IMR-90 (cell line): ENCODE measurements at regions of chr12 and their contacts with region 1.

Region 1: GRCh38 chr12:89524541-89525285 is at the start of gene GALNT4:
- DNase-seq: peak; percentile 85
- ATAC-seq: peak; percentile 81
- H3K4me3 ChIP-seq: peak within 1 kb of the TSS; percentile 88
- H3K27ac ChIP-seq: peak within 1 kb of the TSS; percentile 90
- H3K4me1 ChIP-seq: peaks cover 11% of the 10 kb centered on the region
- H3K27me3 ChIP-seq: no peaks in the 10 kb centered on the region
- CTCF ChIP-seq: peak; percentile 70
- POLR2A ChIP-seq: peak; percentile 19; the same call in 1 of the 2 replicates
- RAD21 ChIP-seq: peak; percentile 58
- total RNA-seq, gene GALNT4: 9.0 and 14.2 TPM in 2 replicates

Region 2: GRCh38 chr12:88141770-88142609 is 1382.7 kb before region 1 on chr12 and contains the starts of genes CEP290 and TMTC3:
- CTCF ChIA-PET with region 1: no interaction called
- POLR2A ChIA-PET with region 1: no interaction called
- dilution Hi-C with region 1: no loop called
- in situ Hi-C with region 1: loop called (anchors 25 kb)
- intact Hi-C with region 1: no loop called
- DNase-seq: peak; percentile 100
- ATAC-seq: peak; percentile 98
- H3K4me3 ChIP-seq: peak within 1 kb of the TSS; percentile 68
- H3K27ac ChIP-seq: peak within 1 kb of the TSS; percentile 57
- H3K4me1 ChIP-seq: no peaks in the 10 kb centered on the region
- H3K27me3 ChIP-seq: no peaks in the 10 kb centered on the region
- CTCF ChIP-seq: no peak
- POLR2A ChIP-seq: peak; percentile 62; the same call in 1 of the 2 replicates
- RAD21 ChIP-seq: no peak; the same call in 1 of the 2 replicates
- total RNA-seq, gene CEP290: 7.9 and 17.5 TPM in 2 replicates
- total RNA-seq, gene TMTC3: 44.3 and 70.8 TPM in 2 replicates

Region 3: DNA sequence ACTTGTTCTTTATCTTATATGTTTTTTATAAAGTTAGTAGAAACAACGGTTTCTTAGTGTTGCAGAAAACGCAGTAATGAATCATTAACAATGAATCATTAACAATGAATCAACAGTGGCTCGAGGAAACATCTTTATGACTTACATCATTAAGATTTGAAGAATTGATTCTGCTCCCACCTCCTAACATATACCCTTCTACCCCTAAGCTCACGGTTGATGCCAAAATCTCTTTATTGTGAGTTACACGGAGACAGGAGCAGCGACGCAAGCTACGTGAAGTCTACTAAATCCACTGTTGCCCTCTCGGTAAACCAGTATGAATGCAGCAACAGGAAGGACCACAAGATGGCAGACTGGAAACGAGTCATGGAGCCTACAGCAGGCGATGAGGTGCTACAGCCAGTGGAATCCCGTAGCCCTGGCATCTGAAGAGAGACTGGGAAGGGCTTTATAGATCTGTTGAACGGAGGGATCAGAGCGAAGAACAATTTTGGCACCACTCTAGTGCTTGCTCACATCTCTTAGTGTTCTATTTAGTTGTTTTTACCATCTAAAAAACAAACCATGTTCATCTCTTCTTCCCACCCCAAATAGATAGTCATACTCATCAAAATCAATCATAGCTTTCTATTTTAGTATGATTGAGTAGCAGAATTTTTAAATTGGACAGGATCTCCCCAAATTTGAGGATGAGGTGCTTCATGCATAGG is 505.1 kb before region 1 on chr12:
- CTCF ChIA-PET with region 1: interaction called, 10 read pairs
- POLR2A ChIA-PET with region 1: no interaction called
- dilution Hi-C with region 1: no loop called
- in situ Hi-C with region 1: loop called (anchors 5 kb)
- intact Hi-C with region 1: loop called (anchors 1 kb)
- DNase-seq: peak; percentile 88
- ATAC-seq: peak; percentile 97
- H3K4me3 ChIP-seq: peak overlapping the region; percentile 28
- H3K27ac ChIP-seq: no peak overlapping the region; the same call in 1 of the 2 replicates
- H3K4me1 ChIP-seq: no peaks in the 10 kb centered on the region
- H3K27me3 ChIP-seq: no peaks in the 10 kb centered on the region
- CTCF ChIP-seq: peak; percentile 96
- POLR2A ChIP-seq: no peak; the same call in 1 of the 2 replicates
- RAD21 ChIP-seq: peak; percentile 95

Region 4: GRCh38 chr12:89051065-89051677 is 473.5 kb before region 1 on chr12:
- CTCF ChIA-PET with region 1: no interaction called
- POLR2A ChIA-PET with region 1: no interaction called
- dilution Hi-C with region 1: no loop called
- in situ Hi-C with region 1: no loop called
- intact Hi-C with region 1: loop called (anchors 10 kb)
- DNase-seq: peak; percentile 78
- ATAC-seq: peak; percentile 63
- H3K4me3 ChIP-seq: no peak overlapping the region
- H3K27ac ChIP-seq: no peak overlapping the region
- H3K4me1 ChIP-seq: no peaks in the 10 kb centered on the region
- H3K27me3 ChIP-seq: no peaks in the 10 kb centered on the region
- CTCF ChIP-seq: peak; percentile 88
- POLR2A ChIP-seq: no peak
- RAD21 ChIP-seq: peak; percentile 90

Region 5: DNA sequence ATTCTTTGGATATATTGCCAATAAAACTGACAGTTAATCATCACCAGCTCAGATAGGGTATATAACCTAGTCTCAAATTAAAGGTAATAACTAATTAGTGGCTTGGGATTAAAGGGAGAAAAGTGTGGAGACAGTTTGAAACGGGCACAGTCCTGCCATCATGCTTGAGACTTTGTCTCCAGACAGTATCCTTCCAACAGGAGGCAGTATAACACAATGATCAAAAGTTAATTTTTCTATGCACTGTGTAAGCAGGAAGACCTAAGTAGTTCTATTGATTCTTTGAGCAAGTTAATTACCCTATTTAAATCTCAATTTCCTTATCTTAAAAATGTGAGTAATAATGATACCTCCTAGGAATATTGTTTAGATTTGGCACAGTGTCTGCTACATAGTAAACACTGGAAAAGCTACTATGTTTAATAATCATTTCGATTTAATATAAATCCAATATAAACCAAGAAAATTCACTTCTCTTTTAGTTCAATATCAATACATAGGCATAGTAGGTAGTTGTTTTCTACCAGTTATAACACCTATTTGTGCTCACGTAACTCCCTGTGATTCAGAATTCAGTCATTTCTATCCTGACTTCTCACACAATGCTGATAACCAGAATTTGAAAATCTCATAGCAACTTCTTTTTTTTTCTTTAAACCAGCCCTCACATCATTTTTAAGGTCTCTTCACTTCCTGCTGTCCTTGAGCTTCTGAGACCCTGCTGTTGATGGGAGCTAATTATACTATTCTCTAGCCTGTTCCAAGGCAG is 53.8 kb before region 1 on chr12:
- CTCF ChIA-PET with region 1: interaction called, 5 read pairs
- POLR2A ChIA-PET with region 1: interaction called, 3 read pairs
- dilution Hi-C with region 1: no loop called
- in situ Hi-C with region 1: loop called (anchors 5 kb)
- intact Hi-C with region 1: loop called (anchors 1 kb)
- DNase-seq: peak; percentile 68
- ATAC-seq: peak; percentile 85
- H3K4me3 ChIP-seq: no peak overlapping the region
- H3K27ac ChIP-seq: no peak overlapping the region
- H3K4me1 ChIP-seq: peaks cover 5% of the 10 kb centered on the region; the same call in 1 of the 2 replicates
- H3K27me3 ChIP-seq: no peaks in the 10 kb centered on the region
- CTCF ChIP-seq: peak; percentile 73
- POLR2A ChIP-seq: no peak
- RAD21 ChIP-seq: peak; percentile 80

Region 6: DNA sequence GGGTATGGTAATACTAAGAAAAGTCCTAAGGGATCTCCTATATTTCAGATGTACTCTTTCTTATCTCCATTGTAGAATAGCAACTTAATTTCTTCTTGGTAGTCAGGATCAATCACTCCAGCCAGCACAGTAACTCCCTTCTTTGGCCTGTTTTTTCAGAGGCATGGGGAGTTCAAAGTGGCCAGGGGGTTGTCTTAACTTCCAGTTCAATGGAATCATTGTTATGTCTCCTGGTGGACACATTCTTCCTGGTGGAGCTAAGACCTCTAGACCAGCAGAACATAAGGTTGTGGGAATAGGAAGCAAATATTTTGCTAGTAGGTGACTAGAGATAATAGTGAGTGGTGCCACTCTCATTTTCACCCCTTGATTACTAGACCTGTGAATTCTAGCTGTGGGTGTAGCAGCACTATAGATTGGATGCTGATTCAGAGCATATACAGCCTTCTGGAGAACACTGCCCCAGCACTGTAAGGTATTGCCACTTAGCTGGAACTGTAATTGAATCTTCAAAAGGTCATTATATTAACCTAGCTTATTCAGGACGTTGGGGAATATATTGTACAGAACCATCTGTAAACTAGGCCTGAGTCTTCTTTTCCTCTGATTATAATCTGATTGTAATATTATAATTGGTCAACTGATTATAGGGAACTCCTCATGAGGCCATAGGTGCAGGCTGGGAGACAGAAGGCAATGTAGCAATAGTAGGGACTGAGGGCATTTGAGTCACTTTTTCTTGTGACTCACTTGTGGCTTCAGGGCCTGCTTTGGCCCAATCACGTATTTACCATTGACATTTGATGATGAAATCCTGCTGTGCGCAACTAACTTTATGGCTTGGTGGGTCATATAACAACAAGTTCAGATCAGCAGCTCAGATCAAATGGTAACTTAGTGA is 244.1 kb after region 1 on chr12:
- CTCF ChIA-PET with region 1: no interaction called
- POLR2A ChIA-PET with region 1: no interaction called
- dilution Hi-C with region 1: no loop called
- in situ Hi-C with region 1: no loop called
- intact Hi-C with region 1: no loop called
- DNase-seq: peak; percentile 98
- ATAC-seq: peak; percentile 94
- H3K4me3 ChIP-seq: no peak overlapping the region
- H3K27ac ChIP-seq: no peak overlapping the region
- H3K4me1 ChIP-seq: peaks cover 10% of the 10 kb centered on the region
- H3K27me3 ChIP-seq: no peaks in the 10 kb centered on the region
- CTCF ChIP-seq: no peak
- POLR2A ChIP-seq: no peak
- RAD21 ChIP-seq: no peak